IMR-90 (cell line): ENCODE measurements at regions of chr13 and their contacts with region 1.

Region 1: DNA sequence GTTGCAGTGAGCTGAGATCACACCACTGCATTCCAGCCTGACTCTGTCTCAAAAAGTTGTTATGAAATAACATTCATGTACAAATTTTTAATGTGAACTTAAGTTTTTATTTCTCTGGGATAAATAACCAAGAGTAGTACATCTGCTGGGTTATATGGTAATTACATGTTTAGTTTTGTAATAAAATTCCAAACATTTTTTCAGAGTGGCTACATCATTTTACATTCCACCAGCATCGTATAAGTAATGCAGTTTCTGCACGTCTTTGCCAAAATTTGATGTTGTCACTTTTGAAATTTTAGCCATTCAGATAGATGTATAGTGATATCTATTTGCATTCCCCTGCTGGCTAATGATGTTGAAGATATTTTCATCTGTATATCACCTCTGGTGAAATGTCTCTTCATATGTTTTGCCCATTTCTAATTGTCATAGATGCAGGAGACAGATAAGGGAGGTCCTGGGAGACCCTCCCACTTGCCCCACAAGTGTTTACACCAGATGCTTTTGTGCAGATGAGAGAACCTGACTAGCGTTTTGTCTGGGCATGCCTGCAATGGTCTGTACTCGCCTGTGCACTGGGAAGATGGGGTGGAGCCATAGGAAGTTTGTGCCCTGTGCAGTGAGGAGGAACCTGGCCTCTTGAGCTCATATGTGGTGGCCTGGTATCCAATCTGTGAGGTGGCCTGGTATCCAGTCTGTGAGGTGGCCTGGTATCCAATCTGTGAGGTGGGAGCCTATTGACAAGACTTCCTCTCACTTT is 12.7 kb upstream of the KBTBD6 start:
- DNase-seq: peak; percentile 74
- ATAC-seq: peak; percentile 79
- H3K4me3 ChIP-seq: no peak overlapping the region
- H3K27ac ChIP-seq: peak overlapping the region; percentile 92
- H3K4me1 ChIP-seq: peaks cover 11% of the 10 kb centered on the region
- H3K27me3 ChIP-seq: no peaks in the 10 kb centered on the region
- CTCF ChIP-seq: no peak
- POLR2A ChIP-seq: no peak
- RAD21 ChIP-seq: no peak

Region 2: GRCh38 chr13:41188584-41188983 is 43.3 kb after region 1 on chr13:
- CTCF ChIA-PET with region 1: no interaction called
- POLR2A ChIA-PET with region 1: no interaction called
- dilution Hi-C with region 1: no loop called
- in situ Hi-C with region 1: no loop called
- intact Hi-C with region 1: loop called (anchors 5 kb)
- DNase-seq: peak; percentile 89
- ATAC-seq: peak; percentile 83
- H3K4me3 ChIP-seq: no peak overlapping the region
- H3K27ac ChIP-seq: peak overlapping the region; percentile 87
- H3K4me1 ChIP-seq: peaks cover 3% of the 10 kb centered on the region
- H3K27me3 ChIP-seq: no peaks in the 10 kb centered on the region
- CTCF ChIP-seq: no peak
- POLR2A ChIP-seq: no peak
- RAD21 ChIP-seq: no peak